Activated CD8-positive, alpha-beta T cell treated with anti-CD3 and anti-CD28 coated beads for 36 hours (primary cell): ENCODE measurements at regions of chr5 and their contacts with region 1.

Region 1: GRCh38 chr5:154878642-154879335 is 20.4 kb downstream of the CNOT8 start:
- DNase-seq: no peak
- ATAC-seq: no peak
- H3K4me3 Mint-ChIP-seq: no peak overlapping the region
- H3K27ac Mint-ChIP-seq: no peak overlapping the region
- H3K4me1 Mint-ChIP-seq: no peaks in the 10 kb centered on the region
- H3K27me3 Mint-ChIP-seq: no peaks in the 10 kb centered on the region
- CTCF ChIP-seq: no peak

Region 2: DNA sequence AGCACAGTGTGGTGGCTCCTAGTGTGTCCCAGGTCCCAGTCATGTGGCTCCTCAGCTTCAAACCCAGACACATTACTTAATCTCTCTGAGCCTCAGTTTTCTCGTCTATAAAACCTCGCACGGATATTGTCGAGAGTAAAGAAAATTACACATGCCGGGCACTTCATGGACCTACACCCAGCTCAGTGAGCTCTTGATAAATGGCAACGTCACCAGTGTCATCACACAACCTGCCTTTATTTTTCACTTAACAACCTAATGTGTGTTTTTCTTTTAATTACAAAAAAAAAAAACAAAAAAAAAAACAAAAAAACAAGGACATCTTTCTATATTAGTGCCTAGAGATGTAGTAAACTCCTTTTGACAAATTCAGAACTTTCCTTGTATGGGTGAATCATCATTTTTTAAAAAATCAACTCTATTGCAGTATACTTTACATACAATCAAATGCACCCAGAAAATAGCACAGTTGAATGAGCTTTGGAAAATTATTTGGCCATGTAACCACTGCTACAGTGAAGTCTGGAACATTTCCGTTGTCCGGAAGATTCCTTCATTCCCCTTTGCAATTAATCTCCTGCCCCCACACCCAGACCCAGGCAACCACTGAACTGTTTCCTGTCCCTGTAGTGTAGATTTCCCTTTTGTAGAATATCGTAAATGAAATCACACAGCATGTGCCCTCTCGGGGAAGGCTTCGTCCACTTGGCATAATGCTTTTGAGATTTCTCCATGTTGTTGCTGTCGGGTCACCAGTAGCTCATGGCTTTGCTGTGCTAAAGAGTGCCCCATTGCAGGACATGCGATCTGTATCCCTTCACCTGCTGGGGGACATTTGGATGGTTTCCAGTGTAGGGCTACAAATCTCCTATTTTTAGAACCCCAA is 224.1 kb before region 1 on chr5:
- CTCF ChIA-PET with region 1: no interaction called
- POLR2A ChIA-PET with region 1: no interaction called
- intact Hi-C with region 1: loop called (anchors 10 kb)
- DNase-seq: no peak
- ATAC-seq: no peak
- H3K4me3 Mint-ChIP-seq: no peak overlapping the region
- H3K27ac Mint-ChIP-seq: no peak overlapping the region
- H3K4me1 Mint-ChIP-seq: peaks cover 8% of the 10 kb centered on the region
- H3K27me3 Mint-ChIP-seq: no peaks in the 10 kb centered on the region
- CTCF ChIP-seq: no peak

Region 3: DNA sequence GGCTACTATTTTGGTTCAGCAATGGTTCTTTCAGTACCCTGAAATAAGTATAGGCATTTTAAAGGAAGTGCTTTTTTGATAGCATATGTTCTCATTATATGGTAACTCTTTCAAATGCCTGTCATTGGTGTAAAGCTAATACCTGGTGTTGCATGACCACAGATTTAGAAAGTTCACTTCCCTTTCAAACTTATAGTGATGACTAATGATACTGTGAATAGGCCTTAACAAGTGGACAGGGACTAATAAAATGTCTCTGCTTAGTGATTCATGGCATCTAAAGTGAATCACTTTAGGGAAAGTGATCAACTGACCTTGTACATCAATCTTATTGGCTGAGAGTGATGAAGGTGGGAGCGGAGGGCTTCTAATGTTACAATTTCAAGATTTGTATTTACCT is 83.7 kb after region 1 on chr5:
- CTCF ChIA-PET with region 1: no interaction called
- POLR2A ChIA-PET with region 1: no interaction called
- intact Hi-C with region 1: no loop called
- DNase-seq: no peak
- ATAC-seq: no peak
- H3K4me3 Mint-ChIP-seq: no peak overlapping the region
- H3K27ac Mint-ChIP-seq: no peak overlapping the region
- H3K4me1 Mint-ChIP-seq: no peaks in the 10 kb centered on the region
- H3K27me3 Mint-ChIP-seq: no peaks in the 10 kb centered on the region
- CTCF ChIP-seq: no peak